ENCODE measurements at regions of chr1 and their contacts with region 1.

Region 1: GRCh38 chr1:24688621-24689195 is 45.6 kb downstream of the SRRM1 start:
- DNase-seq: peak; percentile 63 to 85
- H3K4me3 ChIP-seq: no peak overlapping the region; a peak in 1 of 8 replicates
- H3K27ac ChIP-seq: no peak overlapping the region
- H3K4me1 ChIP-seq: peaks cover 0 to 2% (median 1%) of the 10 kb centered on the region in 4 experiments; a peak in 2 of 7 replicates
- H3K27me3 ChIP-seq: no peaks in the 10 kb centered on the region
- CTCF ChIP-seq: peak; percentile 82 to 94 (median 93)
- EP300 ChIP-seq: no peak
- POLR2A ChIP-seq: no peak
- RAD21 ChIP-seq: peak; percentile 97

Region 2: DNA sequence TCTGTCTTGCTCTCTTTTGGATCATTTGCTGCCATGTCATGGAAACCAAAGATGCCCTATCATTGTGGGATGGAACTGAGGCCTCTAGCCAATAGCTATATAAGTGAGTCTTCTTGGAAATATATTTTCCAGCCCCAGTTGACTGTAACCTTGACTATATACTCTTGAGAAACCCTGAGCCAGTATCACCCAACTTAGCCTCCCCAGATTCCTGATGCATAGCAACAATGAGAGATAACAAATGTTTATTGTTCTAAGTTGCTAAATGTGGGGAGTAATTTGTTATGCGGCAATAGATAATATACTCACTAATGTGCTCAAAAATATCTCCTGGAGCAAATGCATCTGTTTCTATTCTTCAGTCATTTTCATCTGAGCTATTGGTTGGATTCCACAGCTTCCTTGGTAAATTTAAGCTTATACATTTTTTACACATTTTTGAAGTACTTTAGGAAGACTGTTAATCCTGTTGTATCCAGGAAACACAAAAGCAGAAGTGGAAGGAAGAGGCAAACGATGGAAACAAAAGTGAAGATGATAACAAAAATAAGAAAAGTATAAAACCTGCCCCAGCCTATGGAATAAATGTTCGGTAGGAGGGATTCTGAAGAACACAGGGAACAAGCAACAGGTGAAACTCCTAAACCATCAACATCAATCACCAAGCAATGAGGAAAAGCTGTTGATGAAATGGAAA is 51.9 kb before region 1 on chr1:
- CTCF ChIA-PET with region 1: no interaction called
- POLR2A ChIA-PET with region 1: no interaction called
- DNase-seq: no peak
- H3K4me3 ChIP-seq: no peak overlapping the region
- H3K27ac ChIP-seq: no peak overlapping the region
- H3K4me1 ChIP-seq: peaks cover 0 to 6% (median 5%) of the 10 kb centered on the region in 4 experiments; a peak in 6 of 7 replicates
- H3K27me3 ChIP-seq: no peaks in the 10 kb centered on the region
- CTCF ChIP-seq: no peak
- EP300 ChIP-seq: no peak
- POLR2A ChIP-seq: no peak
- RAD21 ChIP-seq: no peak

Region 3: GRCh38 chr1:24727501-24728216 is 39.0 kb after region 1 on chr1:
- CTCF ChIA-PET with region 1: interaction called, 17 read pairs
- POLR2A ChIA-PET with region 1: interaction called, 3 read pairs
- DNase-seq: no peak
- H3K4me3 ChIP-seq: no peak overlapping the region
- H3K27ac ChIP-seq: no peak overlapping the region
- H3K4me1 ChIP-seq: peaks cover 0 to 29% (median 15%) of the 10 kb centered on the region in 4 experiments; a peak in 6 of 7 replicates
- H3K27me3 ChIP-seq: no peaks in the 10 kb centered on the region
- CTCF ChIP-seq: no peak
- EP300 ChIP-seq: no peak
- POLR2A ChIP-seq: no peak
- RAD21 ChIP-seq: no peak

Region 4: GRCh38 chr1:24754229-24754628 is 65.5 kb after region 1 on chr1:
- CTCF ChIA-PET with region 1: interaction called, 17 read pairs
- POLR2A ChIA-PET with region 1: no interaction called
- DNase-seq: peak in 1 of 2 experiments; percentile 33
- H3K4me3 ChIP-seq: no peak overlapping the region
- H3K27ac ChIP-seq: no peak overlapping the region
- H3K4me1 ChIP-seq: peaks cover 0 to 7% (median 0%) of the 10 kb centered on the region in 4 experiments; a peak in 2 of 7 replicates
- H3K27me3 ChIP-seq: no peaks in the 10 kb centered on the region
- CTCF ChIP-seq: no peak
- EP300 ChIP-seq: no peak
- POLR2A ChIP-seq: no peak
- RAD21 ChIP-seq: no peak

Region 5: GRCh38 chr1:24786191-24786590 is 97.5 kb after region 1 on chr1:
- CTCF ChIA-PET with region 1: interaction called, 13 read pairs
- POLR2A ChIA-PET with region 1: no interaction called
- DNase-seq: no peak
- H3K4me3 ChIP-seq: no peak overlapping the region
- H3K27ac ChIP-seq: no peak overlapping the region
- H3K4me1 ChIP-seq: no peaks in the 10 kb centered on the region
- H3K27me3 ChIP-seq: no peaks in the 10 kb centered on the region
- CTCF ChIP-seq: no peak
- EP300 ChIP-seq: no peak
- POLR2A ChIP-seq: no peak
- RAD21 ChIP-seq: no peak

Region 6: DNA sequence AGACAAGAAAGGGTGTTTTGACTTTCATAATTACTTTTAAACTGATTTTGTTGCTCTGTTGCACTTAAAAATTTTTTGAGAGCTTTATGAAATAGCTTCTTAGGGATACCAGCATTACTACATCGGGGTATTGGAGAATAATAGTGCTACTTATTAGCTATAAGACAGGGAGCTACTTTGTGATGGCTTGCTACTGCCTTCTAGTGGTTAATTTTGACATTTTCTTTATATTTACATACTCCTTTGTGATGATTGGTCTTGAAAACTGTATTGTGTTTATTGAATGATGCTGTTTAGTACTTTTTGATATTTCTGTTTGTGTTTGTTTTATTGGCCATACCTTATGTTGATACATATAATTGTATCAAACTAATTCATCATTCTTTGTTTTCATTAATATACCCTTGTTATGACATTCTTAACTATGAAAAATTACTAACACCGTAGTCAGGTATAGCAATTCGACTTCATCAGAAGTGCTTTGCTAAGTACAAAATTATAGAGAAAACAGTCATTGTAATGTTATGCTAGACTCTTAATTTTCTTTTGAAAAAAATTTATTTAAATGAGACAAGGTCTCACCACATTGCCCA is 142.1 kb after region 1 on chr1:
- CTCF ChIA-PET with region 1: interaction called, 247 read pairs
- POLR2A ChIA-PET with region 1: interaction called, 3 read pairs
- DNase-seq: no peak
- H3K4me3 ChIP-seq: no peak overlapping the region
- H3K27ac ChIP-seq: no peak overlapping the region
- H3K4me1 ChIP-seq: no peaks in the 10 kb centered on the region; a peak in 1 of 7 replicates
- H3K27me3 ChIP-seq: no peaks in the 10 kb centered on the region
- CTCF ChIP-seq: peak in 2 of 3 experiments; percentile 43 to 59; a peak in 2 of 4 replicates
- EP300 ChIP-seq: no peak
- POLR2A ChIP-seq: no peak
- RAD21 ChIP-seq: peak; percentile 74 to 84

Measured in H1 (cell line).